ENCODE measurements at regions of chr4 and their contacts with region 1.

Region 1: GRCh38 chr4:2934813-2935761 is 28.1 kb downstream of the NOP14 start:
- DNase-seq: peak; percentile 93 to 96
- H3K4me3 ChIP-seq: peak overlapping the region; percentile 80 to 97
- H3K27ac ChIP-seq: peak overlapping the region; percentile 82 to 92
- H3K4me1 ChIP-seq: peaks cover 0 to 53% (median 28%) of the 10 kb centered on the region in 4 donors
- H3K27me3 ChIP-seq: no peaks in the 10 kb centered on the region
- CTCF ChIP-seq: no peak

Region 2: GRCh38 chr4:973431-974397 is 1961.4 kb before region 1 on chr4 and contains the start of gene DGKQ:
- intact Hi-C with region 1: loop called (anchors 10 kb)
- DNase-seq: peak; percentile 84 to 93
- H3K4me3 ChIP-seq: peak within 1 kb of the TSS; percentile 61 to 73
- H3K27ac ChIP-seq: peak within 1 kb of the TSS; percentile 36 to 45
- H3K4me1 ChIP-seq: peaks cover 0 to 29% (median 23%) of the 10 kb centered on the region in 4 donors
- H3K27me3 ChIP-seq: no peaks in the 10 kb centered on the region
- CTCF ChIP-seq: no peak

Region 3: DNA sequence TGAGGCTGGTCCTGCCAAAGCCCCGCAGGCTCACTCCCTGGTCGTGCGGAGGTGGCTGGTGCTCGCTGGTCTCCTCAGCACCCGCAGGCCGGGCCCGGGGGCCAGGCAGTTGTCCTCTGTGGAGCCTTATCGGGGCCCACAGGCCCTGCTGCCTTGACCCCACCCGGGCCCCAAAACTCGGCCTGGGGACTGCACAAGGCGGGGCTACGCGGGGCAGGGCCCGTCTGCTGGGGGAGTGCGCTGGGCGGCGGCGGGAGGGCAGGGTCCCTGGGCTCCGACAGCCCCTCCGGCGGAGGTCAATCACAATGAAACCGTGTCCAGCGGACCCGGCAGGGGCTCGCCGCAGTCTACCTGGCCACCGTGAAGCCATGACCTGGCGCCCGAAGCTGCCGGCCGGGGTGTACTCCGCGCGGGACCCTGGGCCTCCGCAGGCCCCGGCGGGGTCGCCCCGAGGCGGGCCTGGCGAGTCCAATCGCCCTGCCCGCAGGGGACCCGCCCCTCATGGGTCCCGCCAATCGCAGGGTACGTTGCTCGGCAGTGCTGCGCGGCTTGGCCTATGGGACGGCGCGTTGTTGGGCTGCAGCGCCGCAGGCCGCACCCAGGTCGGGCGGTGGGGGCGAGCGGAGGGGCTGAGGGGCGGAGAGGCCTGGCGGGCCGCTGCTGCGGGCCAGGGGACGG is 91.7 kb before region 1 on chr4 and contains the start of gene ADD1:
- intact Hi-C with region 1: loop called (anchors 5 kb)
- DNase-seq: peak; percentile 82 to 96
- H3K4me3 ChIP-seq: peak within 1 kb of the TSS; percentile 82 to 92
- H3K27ac ChIP-seq: peak within 1 kb of the TSS; percentile 93 to 97
- H3K4me1 ChIP-seq: peaks cover 0 to 46% (median 26%) of the 10 kb centered on the region in 4 donors
- H3K27me3 ChIP-seq: no peaks in the 10 kb centered on the region
- CTCF ChIP-seq: peak in 1 of 2 experiments; percentile 16